IMR-90 (cell line): ENCODE measurements at regions of chr10 and their contacts with region 1.

Region 1: GRCh38 chr10:122051251-122051996 is 62.5 kb downstream of the TACC2 start:
- DNase-seq: peak; percentile 65
- ATAC-seq: peak; percentile 81
- H3K4me3 ChIP-seq: no peak overlapping the region
- H3K27ac ChIP-seq: no peak overlapping the region
- H3K4me1 ChIP-seq: no peaks in the 10 kb centered on the region
- H3K27me3 ChIP-seq: 0 out of 2 replicates have a peak, but pooled peaks cover 3% of the 10 kb centered on the region
- CTCF ChIP-seq: peak; percentile 84
- POLR2A ChIP-seq: no peak
- RAD21 ChIP-seq: peak; percentile 38

Region 2: GRCh38 chr10:121927841-121928527 is 123.4 kb before region 1 on chr10 and contains the start of gene ATE1:
- CTCF ChIA-PET with region 1: no interaction called
- POLR2A ChIA-PET with region 1: no interaction called
- dilution Hi-C with region 1: no loop called
- in situ Hi-C with region 1: no loop called
- intact Hi-C with region 1: loop called (anchors 5 kb)
- DNase-seq: peak; percentile 88
- ATAC-seq: peak; percentile 95
- H3K4me3 ChIP-seq: peak within 1 kb of the TSS; percentile 91
- H3K27ac ChIP-seq: peak within 1 kb of the TSS; percentile 98
- H3K4me1 ChIP-seq: no peaks in the 10 kb centered on the region
- H3K27me3 ChIP-seq: no peaks in the 10 kb centered on the region
- CTCF ChIP-seq: no peak; the same call in 1 of the 2 replicates
- POLR2A ChIP-seq: peak; percentile 85
- RAD21 ChIP-seq: no peak
- total RNA-seq, gene ATE1: 21.9 and 27.8 TPM in 2 replicates

Region 3: DNA sequence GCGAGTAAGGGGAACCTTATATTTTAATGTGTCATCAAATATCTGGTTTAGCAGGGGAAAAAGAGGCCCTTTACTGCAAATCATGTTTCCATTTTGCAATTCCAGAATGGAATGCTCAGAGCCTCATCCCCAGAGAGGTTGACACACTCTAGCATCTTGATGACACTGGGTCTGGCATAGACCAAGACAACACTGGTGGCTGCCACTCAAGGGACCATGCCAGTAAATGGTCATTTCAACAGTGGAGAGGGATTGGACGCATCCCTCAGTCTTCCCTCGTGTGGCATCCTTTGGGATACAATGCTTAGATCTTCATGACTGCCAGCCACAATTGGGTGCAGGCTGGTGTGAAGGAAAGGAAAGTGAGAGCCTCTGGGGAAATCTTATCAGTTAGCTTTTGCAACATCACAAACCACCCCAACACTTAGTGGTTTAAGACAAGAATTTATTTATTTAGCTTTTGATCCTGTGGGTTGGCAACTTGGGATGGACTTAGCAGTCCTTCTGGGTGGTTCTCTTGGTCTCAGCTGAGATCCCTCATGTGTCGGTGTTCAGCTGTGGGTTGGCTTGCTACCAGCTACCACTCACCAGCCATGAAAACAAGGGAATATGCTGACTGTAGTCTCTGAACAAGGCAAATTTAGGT is 40.9 kb before region 1 on chr10:
- CTCF ChIA-PET with region 1: no interaction called
- POLR2A ChIA-PET with region 1: no interaction called
- dilution Hi-C with region 1: no loop called
- in situ Hi-C with region 1: no loop called
- intact Hi-C with region 1: no loop called
- DNase-seq: no peak
- ATAC-seq: no peak
- H3K4me3 ChIP-seq: no peak overlapping the region
- H3K27ac ChIP-seq: no peak overlapping the region
- H3K4me1 ChIP-seq: no peaks in the 10 kb centered on the region
- H3K27me3 ChIP-seq: peaks cover 7% of the 10 kb centered on the region; the same call in 1 of the 2 replicates
- CTCF ChIP-seq: no peak
- POLR2A ChIP-seq: no peak
- RAD21 ChIP-seq: no peak

Region 4: DNA sequence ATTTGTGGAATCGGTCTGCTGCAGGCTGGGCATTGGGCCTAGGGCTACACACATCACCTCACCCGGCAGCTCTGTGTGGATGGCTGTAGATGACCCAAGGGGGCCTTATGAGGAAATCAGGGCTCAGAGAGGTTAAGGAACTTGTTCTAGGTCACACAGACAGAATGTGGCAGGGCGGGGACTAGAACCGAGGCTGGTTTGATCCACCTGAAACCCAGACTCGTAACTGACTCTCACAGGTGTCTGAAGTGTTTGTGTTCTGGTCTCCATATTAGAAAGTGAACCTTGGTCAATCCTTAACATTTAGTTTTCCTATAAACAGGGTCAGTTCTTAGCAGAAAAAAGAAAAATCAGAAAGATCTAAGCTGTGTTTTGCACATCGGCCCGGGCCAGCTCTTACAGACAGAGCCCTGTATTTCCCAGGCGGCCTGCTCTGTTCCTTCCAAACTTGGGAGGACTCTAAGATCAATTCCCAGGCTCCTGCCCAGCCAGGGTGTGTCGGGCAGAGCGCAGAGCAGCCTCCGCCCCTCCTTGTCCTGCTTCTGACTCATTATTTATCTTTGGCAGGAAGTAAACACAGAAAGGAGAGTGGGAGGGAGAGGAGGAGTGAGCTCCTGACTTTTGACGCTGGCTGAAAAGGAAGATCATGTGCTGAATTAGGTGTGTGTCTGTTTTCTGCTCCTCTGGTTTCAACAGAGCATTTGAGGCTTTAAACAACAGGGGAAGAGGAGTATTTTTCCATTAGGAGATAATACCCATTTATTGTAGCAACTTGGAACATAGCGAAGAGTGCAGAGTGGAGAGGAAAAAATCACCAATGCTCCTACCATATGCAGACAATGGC is 11.6 kb after region 1 on chr10:
- CTCF ChIA-PET with region 1: interaction called, 13 read pairs
- POLR2A ChIA-PET with region 1: no interaction called
- dilution Hi-C with region 1: no loop called
- in situ Hi-C with region 1: no loop called
- intact Hi-C with region 1: no loop called
- DNase-seq: peak; percentile 83
- ATAC-seq: peak; percentile 97
- H3K4me3 ChIP-seq: no peak overlapping the region
- H3K27ac ChIP-seq: no peak overlapping the region
- H3K4me1 ChIP-seq: peaks cover 8% of the 10 kb centered on the region
- H3K27me3 ChIP-seq: no peaks in the 10 kb centered on the region
- CTCF ChIP-seq: no peak
- POLR2A ChIP-seq: no peak
- RAD21 ChIP-seq: no peak

Region 5: DNA sequence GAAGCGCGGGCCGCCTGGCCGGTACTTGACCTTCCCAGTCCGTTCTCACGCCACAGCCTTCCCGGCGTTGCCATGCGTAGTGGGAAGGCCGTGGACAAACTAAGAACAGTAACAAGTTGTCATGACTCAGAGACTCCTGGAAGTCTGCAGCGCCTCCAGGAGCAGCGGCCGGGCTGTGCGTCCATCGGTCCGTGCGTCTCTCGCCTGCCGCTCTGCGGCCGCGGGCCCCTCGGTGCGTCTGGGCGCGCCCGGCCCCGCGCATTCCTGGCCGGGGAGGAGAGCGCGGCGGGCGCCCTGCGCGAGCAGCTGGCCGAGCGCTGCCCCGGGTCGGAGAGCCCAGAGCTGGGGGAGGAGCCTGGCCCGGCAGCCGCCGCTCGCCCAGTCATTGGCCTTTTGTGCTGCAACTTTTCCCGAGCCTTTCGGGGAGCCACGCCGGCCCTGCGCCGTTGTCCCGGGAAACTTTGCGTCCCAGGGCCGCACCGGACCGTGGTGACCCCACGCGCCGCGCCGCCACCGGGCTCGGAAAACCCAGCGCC is 61.3 kb after region 1 on chr10:
- CTCF ChIA-PET with region 1: interaction called, 6 read pairs
- POLR2A ChIA-PET with region 1: no interaction called
- dilution Hi-C with region 1: no loop called
- in situ Hi-C with region 1: no loop called
- intact Hi-C with region 1: loop called (anchors 2 kb)
- DNase-seq: peak; percentile 96
- ATAC-seq: peak; percentile 91
- H3K4me3 ChIP-seq: peak overlapping the region; percentile 70
- H3K27ac ChIP-seq: peak overlapping the region; percentile 65
- H3K4me1 ChIP-seq: peaks cover 10% of the 10 kb centered on the region
- H3K27me3 ChIP-seq: no peaks in the 10 kb centered on the region
- CTCF ChIP-seq: peak; percentile 76
- POLR2A ChIP-seq: peak; percentile 48; the same call in 1 of the 2 replicates
- RAD21 ChIP-seq: peak; percentile 71

Region 6: GRCh38 chr10:122267849-122268737 is 216.7 kb after region 1 on chr10:
- CTCF ChIA-PET with region 1: interaction called, 5 read pairs
- POLR2A ChIA-PET with region 1: no interaction called
- dilution Hi-C with region 1: no loop called
- in situ Hi-C with region 1: no loop called
- intact Hi-C with region 1: loop called (anchors 10 kb)
- DNase-seq: peak; percentile 25
- ATAC-seq: peak; percentile 80
- H3K4me3 ChIP-seq: no peak overlapping the region
- H3K27ac ChIP-seq: no peak overlapping the region
- H3K4me1 ChIP-seq: peaks cover 12% of the 10 kb centered on the region
- H3K27me3 ChIP-seq: no peaks in the 10 kb centered on the region
- CTCF ChIP-seq: peak; percentile 80
- POLR2A ChIP-seq: no peak
- RAD21 ChIP-seq: peak; percentile 56

Region 7: GRCh38 chr10:122435212-122435827 is 383.9 kb after region 1 on chr10:
- CTCF ChIA-PET with region 1: no interaction called
- POLR2A ChIA-PET with region 1: no interaction called
- dilution Hi-C with region 1: no loop called
- in situ Hi-C with region 1: no loop called
- intact Hi-C with region 1: loop called (anchors 5 kb)
- DNase-seq: peak; percentile 55
- ATAC-seq: peak; percentile 46
- H3K4me3 ChIP-seq: no peak overlapping the region
- H3K27ac ChIP-seq: no peak overlapping the region
- H3K4me1 ChIP-seq: no peaks in the 10 kb centered on the region
- H3K27me3 ChIP-seq: no peaks in the 10 kb centered on the region
- CTCF ChIP-seq: peak; percentile 78
- POLR2A ChIP-seq: no peak
- RAD21 ChIP-seq: peak; percentile 85